Dendritic cell treated with granulocyte-macrophage colony-stimulating factor and Interleukin-4, amounts not matched to agents 40 ng/mL and 50 ng/mL, for 4 days (primary cell): ENCODE measurements at regions of chr2 and their contacts with region 1.

Region 1: GRCh38 chr2:16717477-16717876 is 51.8 kb upstream of the CYRIA start:
- H3K4me3 Mint-ChIP-seq: no peak overlapping the region
- H3K27ac Mint-ChIP-seq: peak overlapping the region; percentile 66
- H3K4me1 Mint-ChIP-seq: peaks cover 64% of the 10 kb centered on the region
- H3K27me3 Mint-ChIP-seq: no peaks in the 10 kb centered on the region

Region 2: GRCh38 chr2:16318474-16319195 is 398.8 kb before region 1 on chr2:
- intact Hi-C with region 1: no loop called
- H3K4me3 Mint-ChIP-seq: no peak overlapping the region
- H3K27ac Mint-ChIP-seq: no peak overlapping the region
- H3K4me1 Mint-ChIP-seq: peaks cover 7% of the 10 kb centered on the region
- H3K27me3 Mint-ChIP-seq: peaks cover 1% of the 10 kb centered on the region

Region 3: DNA sequence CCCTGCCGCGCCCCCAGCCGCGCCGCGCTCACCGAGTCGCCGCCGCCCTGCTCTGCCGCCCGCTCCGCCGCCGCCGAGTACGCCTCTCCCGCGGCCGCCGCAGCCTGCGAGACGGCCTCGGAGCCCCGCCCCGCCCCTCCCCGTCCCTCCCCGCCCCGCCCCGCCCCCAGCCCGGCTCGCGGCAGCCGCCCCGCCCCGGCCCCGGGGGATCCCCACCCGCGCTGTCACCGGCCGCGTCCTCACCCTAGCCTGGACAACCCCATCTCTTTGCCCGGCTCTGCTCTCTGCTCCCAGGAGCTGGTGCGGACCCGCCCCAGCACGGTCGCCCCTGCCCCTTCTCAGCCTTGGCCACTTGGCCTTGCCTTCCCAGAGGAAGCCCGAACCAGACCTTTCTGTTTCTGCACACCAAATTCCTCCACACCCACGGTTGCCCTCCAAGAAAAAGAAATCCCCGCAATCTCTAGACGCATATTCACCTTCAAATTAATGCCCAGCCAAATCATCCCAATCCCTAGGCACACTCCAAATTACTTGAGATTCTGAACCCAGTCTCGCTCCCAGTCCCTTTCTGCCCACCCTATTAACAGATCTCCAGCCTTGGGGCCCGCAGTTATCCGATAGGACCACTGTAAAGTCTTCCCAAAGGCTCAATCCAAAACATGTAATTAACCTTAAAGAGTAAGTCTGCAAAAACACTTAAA is 51.6 kb before region 1 on chr2 and contains the start of gene CYRIA:
- intact Hi-C with region 1: loop called (anchors 5 kb)
- H3K4me3 Mint-ChIP-seq: peak within 1 kb of the TSS; percentile 94
- H3K27ac Mint-ChIP-seq: peak within 1 kb of the TSS; percentile 88
- H3K4me1 Mint-ChIP-seq: peaks cover 65% of the 10 kb centered on the region
- H3K27me3 Mint-ChIP-seq: peaks cover 11% of the 10 kb centered on the region

Region 4: GRCh38 chr2:16682431-16683118 is 34.9 kb before region 1 on chr2:
- intact Hi-C with region 1: no loop called
- H3K4me3 Mint-ChIP-seq: no peak overlapping the region
- H3K27ac Mint-ChIP-seq: no peak overlapping the region
- H3K4me1 Mint-ChIP-seq: peaks cover 49% of the 10 kb centered on the region
- H3K27me3 Mint-ChIP-seq: no peaks in the 10 kb centered on the region